Aorta (tissue), 5 donors: ENCODE measurements at regions of chr1 and their contacts with region 1.

Region 1: DNA sequence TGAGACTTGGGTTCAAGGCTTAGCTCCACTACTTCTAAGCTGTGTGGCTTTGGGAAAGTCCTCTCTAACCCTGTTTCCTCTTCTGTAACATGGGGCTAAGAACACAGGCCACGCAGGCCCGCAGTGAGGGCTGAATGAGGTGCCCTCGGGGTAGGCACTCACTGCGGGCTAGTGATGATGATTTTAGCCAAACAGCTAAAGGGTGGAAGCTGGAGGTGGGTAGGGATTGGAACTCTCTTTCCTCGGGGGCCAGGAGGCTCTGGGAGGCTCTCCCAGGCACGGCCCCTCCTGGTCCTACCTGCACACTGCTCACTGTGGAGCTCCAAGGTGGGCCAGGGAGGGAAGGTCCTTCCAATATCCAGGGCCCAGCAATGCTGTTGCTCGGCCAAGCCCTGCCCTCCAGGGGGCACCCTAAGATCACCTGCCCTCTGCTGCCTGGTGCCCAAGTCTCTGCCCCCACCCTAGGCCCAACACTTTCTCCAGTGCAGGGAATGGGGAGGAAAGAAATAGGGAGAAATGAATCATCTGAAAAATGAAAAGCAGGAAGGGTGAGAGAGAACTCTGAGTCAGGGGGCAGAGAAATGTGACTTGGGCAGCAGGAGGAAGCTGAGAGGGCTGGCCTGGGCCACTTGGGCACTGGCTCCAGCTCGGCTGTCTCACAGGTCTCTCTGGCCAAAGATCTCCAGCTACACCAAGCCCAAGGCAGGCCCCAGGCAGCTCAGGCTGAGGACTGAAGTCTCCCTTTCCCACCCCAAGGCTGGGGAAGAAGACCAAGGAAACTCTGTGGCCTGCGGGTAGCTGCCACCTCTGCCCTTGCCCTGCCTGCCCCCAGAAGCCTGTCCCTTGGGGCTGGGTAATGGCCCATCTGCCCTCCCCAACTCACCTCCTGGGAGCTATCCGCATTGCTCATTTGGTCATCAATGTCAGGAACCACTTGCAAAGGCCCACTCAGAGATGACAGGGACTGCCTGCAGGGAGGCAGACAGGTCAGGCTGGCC is 19.3 kb upstream of the EVA1B start:
- DNase-seq: peak; percentile 77 to 87
- ATAC-seq: peak; percentile 80
- H3K4me3 ChIP-seq: no peak overlapping the region
- H3K27ac ChIP-seq: peak overlapping the region; percentile 23 to 91
- H3K4me1 ChIP-seq: no peaks in the 10 kb centered on the region
- H3K27me3 ChIP-seq: no peaks in the 10 kb centered on the region

Region 2: GRCh38 chr1:36257375-36257767 is 85.4 kb before region 1 on chr1:
- intact Hi-C with region 1: no loop called
- DNase-seq: no peak
- ATAC-seq: no peak
- H3K4me3 ChIP-seq: no peak overlapping the region
- H3K27ac ChIP-seq: no peak overlapping the region
- H3K4me1 ChIP-seq: peaks cover 3% of the 10 kb centered on the region in 2 donors
- H3K27me3 ChIP-seq: no peaks in the 10 kb centered on the region

Region 3: DNA sequence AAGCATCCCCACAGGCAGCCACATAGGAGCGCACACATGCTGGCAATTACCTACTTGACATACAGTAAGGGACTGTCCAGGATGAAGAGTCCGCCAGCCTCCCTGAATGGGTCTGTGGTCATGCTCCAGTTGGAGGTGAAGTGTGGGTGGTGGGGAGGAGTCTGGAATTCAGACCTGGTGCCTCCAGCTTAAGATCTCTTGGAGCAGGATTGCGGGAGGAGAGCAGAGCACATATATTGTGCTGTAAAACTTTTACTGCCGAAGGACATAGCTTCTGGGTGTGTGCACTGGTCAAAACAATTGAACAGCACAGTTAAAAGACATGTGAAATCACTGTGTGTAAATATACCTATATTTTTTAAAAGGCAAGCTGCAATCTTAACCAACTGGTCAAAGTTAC is 25.0 kb after region 1 on chr1:
- intact Hi-C with region 1: loop called in 1 of 2 experiments (anchors 1 kb)
- DNase-seq: no peak
- ATAC-seq: no peak
- H3K4me3 ChIP-seq: no peak overlapping the region
- H3K27ac ChIP-seq: no peak overlapping the region
- H3K4me1 ChIP-seq: no peaks in the 10 kb centered on the region
- H3K27me3 ChIP-seq: no peaks in the 10 kb centered on the region

Region 4: GRCh38 chr1:36420836-36421664 is 78.3 kb after region 1 on chr1:
- intact Hi-C with region 1: loop called (anchors 1 to 2 kb)
- DNase-seq: peak; percentile 89 to 97
- ATAC-seq: peak; percentile 95
- H3K4me3 ChIP-seq: no peak overlapping the region
- H3K27ac ChIP-seq: no peak overlapping the region
- H3K4me1 ChIP-seq: no peaks in the 10 kb centered on the region
- H3K27me3 ChIP-seq: no peaks in the 10 kb centered on the region

Region 5: DNA sequence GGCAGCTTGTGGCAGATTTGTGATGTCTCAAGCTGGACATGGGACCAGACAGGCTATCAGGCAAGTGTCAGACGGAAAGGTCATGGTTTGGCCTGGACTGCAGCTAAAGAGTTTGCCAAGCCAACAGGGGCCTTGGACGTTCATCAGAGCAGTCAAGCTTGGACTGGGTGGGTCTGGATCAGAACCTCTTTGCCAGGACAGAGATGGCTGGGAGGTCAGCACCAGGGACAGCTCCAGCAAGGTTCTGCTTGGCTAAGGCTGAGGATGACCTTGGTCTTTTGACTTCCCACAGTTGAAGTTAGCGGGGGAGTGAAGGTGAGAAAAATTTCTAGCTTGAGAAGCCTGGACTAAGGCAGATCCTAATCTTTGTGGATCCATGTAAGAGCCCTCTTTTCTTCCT is 623.5 kb after region 1 on chr1:
- intact Hi-C with region 1: no loop called
- DNase-seq: no peak
- ATAC-seq: no peak
- H3K4me3 ChIP-seq: no peak overlapping the region
- H3K27ac ChIP-seq: no peak overlapping the region
- H3K4me1 ChIP-seq: no peaks in the 10 kb centered on the region
- H3K27me3 ChIP-seq: no peaks in the 10 kb centered on the region